Mammary epithelial cell (primary cell): ENCODE measurements at regions of chr12 and their contacts with region 1.

Region 1: DNA sequence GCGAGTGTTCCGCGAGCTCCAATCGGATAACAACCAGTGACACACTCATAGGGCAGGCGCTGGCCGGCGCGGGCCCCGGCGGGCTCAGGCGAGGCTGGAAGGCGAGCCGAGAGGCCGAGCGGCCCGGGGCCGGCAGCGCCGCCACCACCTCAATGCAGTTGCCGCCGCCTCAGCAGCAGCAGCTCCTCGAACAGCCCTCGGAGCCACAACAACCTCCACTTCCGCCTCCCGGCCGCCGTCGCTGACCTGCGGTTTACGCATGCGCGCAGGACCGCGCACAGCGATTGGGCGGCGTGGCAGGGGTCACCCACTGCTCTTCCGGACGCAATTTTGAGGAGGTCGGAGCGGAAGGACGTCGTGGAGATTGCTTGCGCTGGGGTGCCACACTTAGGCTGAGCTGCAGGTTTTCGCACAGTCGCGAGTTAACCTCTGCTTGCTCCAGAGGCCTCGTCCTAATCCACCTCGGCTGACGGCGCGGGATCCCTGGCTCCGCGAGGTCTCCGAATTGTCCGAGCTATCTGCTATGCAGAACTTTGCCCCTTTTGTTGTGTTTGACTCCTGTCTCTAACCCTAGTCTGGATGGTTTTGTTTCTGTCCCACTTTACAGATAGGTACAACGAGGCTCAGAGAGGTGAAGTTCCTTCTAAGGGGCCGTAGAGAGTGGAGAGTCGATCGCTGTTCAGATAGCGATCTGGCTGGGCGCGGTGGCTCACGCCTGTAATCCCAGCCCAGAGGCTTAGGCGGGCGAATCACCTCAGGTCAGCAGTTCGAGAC is at the starts of genes ACAD10 and BRAP:
- DNase-seq: peak; percentile 95
- H3K4me3 ChIP-seq: peak within 1 kb of the TSS; percentile 84 to 96 (median 89)
- H3K27ac ChIP-seq: peak within 1 kb of the TSS; percentile 73
- H3K4me1 ChIP-seq: peaks cover 15% of the 10 kb centered on the region
- H3K27me3 ChIP-seq: no peaks in the 10 kb centered on the region
- CTCF ChIP-seq: no peak
- total RNA-seq, gene ACAD10: 19.4 to 20.0 TPM
- total RNA-seq, gene BRAP: 20.7 to 25.0 TPM

Region 2: GRCh38 chr12:111599459-111600204 is 86.3 kb before region 1 on chr12:
- CTCF ChIA-PET with region 1: no interaction called
- dilution Hi-C with region 1: no loop called
- in situ Hi-C with region 1: no loop called
- intact Hi-C with region 1: loop called (anchors 5 kb)
- DNase-seq: peak; percentile 81
- H3K4me3 ChIP-seq: peak overlapping the region; percentile 61 to 99 (median 93)
- H3K27ac ChIP-seq: peak overlapping the region; percentile 53
- H3K4me1 ChIP-seq: peaks cover 9% of the 10 kb centered on the region
- H3K27me3 ChIP-seq: no peaks in the 10 kb centered on the region
- CTCF ChIP-seq: no peak

Region 3: DNA sequence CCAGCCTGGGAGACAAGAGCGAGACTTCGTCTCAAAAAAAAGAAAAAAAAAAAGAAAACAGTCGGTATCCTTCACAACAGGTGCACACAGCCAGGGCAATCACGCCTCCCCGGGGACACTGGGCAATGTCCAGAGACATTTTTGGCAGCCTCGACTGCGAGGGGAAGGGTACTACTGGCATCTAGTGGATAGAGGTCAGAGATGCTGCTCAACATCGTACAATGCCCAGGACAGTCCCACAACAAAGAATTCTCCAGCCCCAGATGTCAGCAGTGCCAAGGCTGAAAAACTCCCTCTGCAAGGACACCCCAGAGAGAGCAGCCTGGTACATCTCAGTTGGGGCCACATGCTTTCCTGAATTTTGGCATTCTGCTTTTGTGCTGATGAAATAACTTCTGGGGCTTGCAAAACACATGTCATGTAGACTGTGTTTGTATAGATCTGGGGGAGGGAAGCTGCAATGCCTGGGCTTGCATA is 102.3 kb after region 1 on chr12:
- CTCF ChIA-PET with region 1: no interaction called
- dilution Hi-C with region 1: loop called (anchors 5 kb)
- in situ Hi-C with region 1: no loop called
- intact Hi-C with region 1: loop called (anchors 1 kb)
- DNase-seq: no peak
- H3K4me3 ChIP-seq: no peak overlapping the region
- H3K27ac ChIP-seq: no peak overlapping the region
- H3K4me1 ChIP-seq: no peaks in the 10 kb centered on the region
- H3K27me3 ChIP-seq: no peaks in the 10 kb centered on the region
- CTCF ChIP-seq: peak; percentile 27 to 81

Region 4: DNA sequence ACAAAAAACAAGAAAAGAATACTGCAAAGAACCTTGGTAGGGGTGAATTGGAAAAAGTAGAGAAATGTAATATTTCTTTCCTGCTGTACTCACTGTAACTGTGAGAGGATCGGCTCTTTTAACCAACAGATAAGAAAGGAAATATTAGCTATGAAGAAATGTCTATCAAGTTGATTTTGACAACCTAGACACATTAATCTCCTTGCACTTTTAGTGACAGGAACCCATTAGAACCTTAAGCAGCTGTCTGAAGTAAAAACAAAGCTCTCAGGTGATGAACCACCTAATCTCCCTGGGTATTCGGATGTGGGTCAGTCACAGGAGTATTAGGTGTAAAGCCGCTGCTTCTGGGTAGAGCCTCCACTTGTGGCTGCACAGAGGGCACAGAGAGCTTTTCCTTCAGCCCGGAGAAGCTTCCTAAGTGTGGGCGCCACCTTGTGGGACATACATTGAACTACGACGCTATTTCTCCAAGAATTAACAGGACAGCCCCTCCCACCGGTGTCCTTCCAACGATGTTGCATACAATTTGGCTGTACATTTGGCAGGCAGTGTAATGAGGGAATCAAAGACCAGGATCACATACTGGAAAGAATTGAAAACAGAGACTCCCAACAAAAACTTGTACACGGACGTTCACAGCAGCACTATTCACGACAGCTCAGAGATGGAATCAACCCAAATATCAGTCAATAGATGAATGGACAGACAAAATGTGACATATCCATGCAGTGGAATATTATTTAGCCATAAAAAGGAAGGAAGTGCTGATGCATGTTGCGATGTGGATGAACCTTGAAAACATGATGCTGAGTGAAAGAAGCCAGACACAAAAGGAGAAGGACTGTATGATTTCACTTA is 127.2 kb after region 1 on chr12:
- CTCF ChIA-PET with region 1: interaction called, 11 read pairs
- dilution Hi-C with region 1: no loop called
- in situ Hi-C with region 1: no loop called
- intact Hi-C with region 1: loop called (anchors 2 kb)
- DNase-seq: peak; percentile 68
- H3K4me3 ChIP-seq: no peak overlapping the region
- H3K27ac ChIP-seq: no peak overlapping the region
- H3K4me1 ChIP-seq: no peaks in the 10 kb centered on the region
- H3K27me3 ChIP-seq: no peaks in the 10 kb centered on the region
- CTCF ChIP-seq: peak; percentile 65 to 85